Stomach (tissue), 19 donors: ENCODE measurements at regions of chr17 and their contacts with region 1.

Region 1: DNA sequence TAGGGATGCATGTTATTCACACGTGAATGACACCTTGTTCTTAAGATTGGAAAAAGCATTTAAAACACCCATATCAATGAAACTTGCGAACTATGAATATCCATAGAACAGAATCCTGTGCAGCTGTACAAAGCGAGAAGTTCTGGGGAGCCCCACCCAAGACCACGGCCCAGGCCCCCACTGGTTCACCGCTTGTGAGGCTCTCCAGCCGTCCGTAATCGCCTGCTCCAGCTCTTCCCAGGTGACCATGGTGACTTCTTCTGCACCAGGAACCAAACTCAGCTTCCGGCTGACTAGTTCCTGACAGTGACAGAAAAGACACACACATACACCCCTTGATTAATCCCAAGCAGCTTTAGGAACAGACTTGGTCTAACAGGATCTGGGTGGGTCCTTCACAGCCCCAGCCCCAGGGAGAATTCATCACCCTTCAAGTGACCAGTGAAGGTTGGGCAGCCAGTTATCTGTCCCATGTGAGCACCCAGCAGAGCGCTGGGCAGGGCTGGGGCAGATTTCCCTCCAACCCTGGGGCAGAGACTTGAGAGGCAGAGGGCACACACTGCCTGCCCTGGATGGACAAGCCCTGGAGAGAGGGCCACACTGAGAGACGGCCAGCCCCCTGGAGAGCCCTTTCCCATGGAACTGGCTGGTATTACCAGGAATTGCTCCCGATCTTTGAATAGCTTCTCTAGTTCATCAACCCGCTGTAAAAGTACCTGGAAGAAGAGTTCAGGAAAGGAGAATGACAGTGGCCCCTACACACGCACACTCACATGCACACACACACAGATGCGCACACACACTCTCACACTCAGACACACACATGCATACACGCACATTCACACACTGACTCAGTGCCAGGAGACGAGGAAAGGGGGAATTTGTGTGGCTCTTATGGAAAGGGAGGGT is 3.6 kb downstream of the QRICH2 start:
- DNase-seq: no peak
- H3K4me3 ChIP-seq: no peak overlapping the region
- H3K27ac ChIP-seq: no peak overlapping the region
- H3K4me1 ChIP-seq: no peaks in the 10 kb centered on the region
- H3K27me3 ChIP-seq: no peaks in the 10 kb centered on the region
- CTCF ChIP-seq: no peak
- EP300 ChIP-seq: no peak
- POLR2A ChIP-seq: no peak

Region 2: GRCh38 chr17:76397687-76398487 is 93.4 kb after region 1 on chr17:
- intact Hi-C with region 1: loop called (anchors 5 kb)
- DNase-seq: peak; percentile 93 to 94
- H3K4me3 ChIP-seq: no peak overlapping the region
- H3K27ac ChIP-seq: no peak overlapping the region
- H3K4me1 ChIP-seq: peaks cover 0 to 4% (median 3%) of the 10 kb centered on the region in 4 donors
- H3K27me3 ChIP-seq: no peaks in the 10 kb centered on the region
- CTCF ChIP-seq: peak in 6 of 7 experiments; percentile 53 to 99 (median 98)
- EP300 ChIP-seq: no peak
- POLR2A ChIP-seq: no peak

Region 3: DNA sequence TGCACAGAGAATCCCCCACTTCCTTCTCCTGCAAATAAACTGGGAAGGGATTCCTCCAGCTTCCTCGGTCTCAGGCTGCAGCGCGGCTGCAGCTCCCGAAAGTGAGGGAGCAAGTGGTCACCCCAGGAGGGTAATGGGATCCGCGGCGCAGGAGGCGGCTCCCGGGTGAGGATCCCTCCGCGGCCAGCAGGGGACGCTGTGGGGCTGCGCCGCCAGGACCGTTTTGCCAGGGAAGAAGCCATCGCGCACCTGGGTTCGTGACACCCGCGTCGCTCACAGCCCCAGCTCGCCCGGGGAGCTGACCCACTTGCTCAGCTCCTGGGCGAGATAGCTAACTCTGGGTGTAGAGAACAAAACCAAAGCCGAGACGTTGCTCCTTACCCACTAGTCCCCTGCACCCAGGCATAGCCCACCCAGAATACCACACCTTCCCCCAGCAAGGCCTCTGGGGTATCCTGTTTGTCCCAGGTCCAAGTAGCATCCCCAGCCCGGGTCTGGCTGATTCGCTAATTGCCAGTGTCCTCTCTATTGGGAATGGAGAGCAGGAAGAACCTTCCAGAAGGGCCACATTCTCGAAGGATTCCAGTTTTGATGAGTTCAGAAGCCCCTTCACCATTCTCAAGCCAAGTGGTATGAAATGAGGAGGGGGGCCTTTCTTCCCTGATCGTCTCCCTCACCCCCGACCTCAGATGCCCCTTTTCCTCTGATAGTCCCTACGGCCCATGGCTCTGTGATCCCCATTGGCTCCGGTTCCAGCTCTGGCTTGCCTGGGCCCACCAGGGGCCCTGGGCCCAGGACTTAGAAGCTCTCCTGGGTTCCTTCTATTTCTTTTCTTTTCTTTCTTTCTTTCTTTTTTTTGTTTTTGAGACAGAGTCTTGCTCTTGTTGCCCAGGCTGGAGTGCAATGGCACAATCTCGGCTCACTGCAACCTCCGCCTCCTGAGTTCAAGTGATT is 218.9 kb after region 1 on chr17:
- intact Hi-C with region 1: no loop called
- DNase-seq: peak; percentile 83 to 91
- H3K4me3 ChIP-seq: no peak overlapping the region
- H3K27ac ChIP-seq: no peak overlapping the region
- H3K4me1 ChIP-seq: peaks cover 13 to 43% (median 29%) of the 10 kb centered on the region in 4 donors
- H3K27me3 ChIP-seq: peaks cover 0 to 24% (median 0%) of the 10 kb centered on the region in 3 donors
- CTCF ChIP-seq: peak in 6 of 7 experiments; percentile 84 to 100 (median 98)
- EP300 ChIP-seq: no peak
- POLR2A ChIP-seq: no peak